Naive thymus-derived CD8-positive, alpha-beta T cell (primary cell): ENCODE measurements at regions of chr19 and their contacts with region 1.

Region 1: GRCh38 chr19:46431824-46432223 is 3.1 kb upstream of the PNMA8C start:
- DNase-seq: no peak
- ATAC-seq: no peak
- H3K4me3 Mint-ChIP-seq: no peak overlapping the region
- H3K27ac Mint-ChIP-seq: no peak overlapping the region
- H3K4me1 Mint-ChIP-seq: peaks cover 13 to 24% (median 19%) of the 10 kb centered on the region in 4 donors
- H3K27me3 Mint-ChIP-seq: peaks cover 35 to 74% (median 50%) of the 10 kb centered on the region in 5 donors

Region 2: DNA sequence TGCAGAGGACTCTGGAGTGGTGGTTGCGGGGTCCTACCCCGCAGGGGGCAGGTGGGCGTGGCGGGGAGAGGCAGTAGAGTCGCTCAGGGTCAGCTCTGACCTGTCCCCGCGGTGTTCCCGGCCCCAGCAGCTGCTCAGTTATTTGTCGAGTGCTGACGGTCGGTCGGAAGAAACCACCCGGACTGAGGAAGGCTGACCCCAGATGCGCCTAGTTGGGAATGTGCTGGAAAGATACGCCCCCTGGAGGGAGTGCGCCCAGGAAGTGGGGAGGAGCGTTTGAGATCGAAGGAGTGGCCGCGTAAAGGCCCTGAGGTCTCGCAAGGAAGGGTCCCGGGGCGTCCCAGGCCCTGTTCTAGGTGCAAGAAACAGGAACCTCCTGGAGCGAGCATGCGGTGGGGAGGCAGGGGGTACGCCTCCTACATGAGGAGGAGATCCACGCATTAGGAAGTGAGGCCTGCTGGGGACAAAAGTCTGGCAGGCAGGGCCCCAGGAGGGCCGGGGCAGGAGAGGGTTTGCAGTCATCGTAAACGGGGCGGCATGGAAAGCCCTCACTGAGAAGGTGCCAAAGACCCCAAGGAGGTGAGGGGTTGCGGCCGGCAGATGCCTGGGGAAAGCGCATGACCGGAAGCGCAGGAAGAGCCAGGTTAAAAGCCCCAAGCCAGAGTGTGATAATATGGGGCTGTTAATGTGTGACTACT is 27.6 kb before region 1 on chr19:
- POLR2A ChIA-PET with region 1: interaction called, 10 read pairs
- DNase-seq: no peak
- ATAC-seq: peak; percentile 43 to 44
- H3K4me3 Mint-ChIP-seq: peak overlapping the region; percentile 63 to 90 (median 76)
- H3K27ac Mint-ChIP-seq: peak overlapping the region in 1 of 10 donors; percentile 63
- H3K4me1 Mint-ChIP-seq: peaks cover 18 to 28% (median 22%) of the 10 kb centered on the region in 4 donors
- H3K27me3 Mint-ChIP-seq: peaks cover 34 to 85% (median 55%) of the 10 kb centered on the region in 5 donors

Region 3: GRCh38 chr19:46442808-46443450 is 11.1 kb after region 1 on chr19:
- POLR2A ChIA-PET with region 1: no interaction called
- DNase-seq: no peak
- ATAC-seq: no peak
- H3K4me3 Mint-ChIP-seq: no peak overlapping the region
- H3K27ac Mint-ChIP-seq: peak overlapping the region in 1 of 10 donors; percentile 29
- H3K4me1 Mint-ChIP-seq: peaks cover 0 to 4% (median 3%) of the 10 kb centered on the region in 4 donors
- H3K27me3 Mint-ChIP-seq: peaks cover 3 to 12% (median 8%) of the 10 kb centered on the region in 5 donors

Region 4: GRCh38 chr19:46461537-46461936 is 29.7 kb after region 1 on chr19:
- POLR2A ChIA-PET with region 1: no interaction called
- DNase-seq: no peak
- ATAC-seq: no peak
- H3K4me3 Mint-ChIP-seq: no peak overlapping the region
- H3K27ac Mint-ChIP-seq: no peak overlapping the region
- H3K4me1 Mint-ChIP-seq: no peaks in the 10 kb centered on the region
- H3K27me3 Mint-ChIP-seq: peaks cover 4 to 47% (median 14%) of the 10 kb centered on the region in 5 donors

Region 5: GRCh38 chr19:46487802-46488445 is 56.1 kb after region 1 on chr19:
- POLR2A ChIA-PET with region 1: no interaction called
- DNase-seq: peak; percentile 56 to 82 (median 74)
- ATAC-seq: peak; percentile 71 to 81
- H3K4me3 Mint-ChIP-seq: peak overlapping the region in 2 of 10 donors; percentile 31 to 47
- H3K27ac Mint-ChIP-seq: peak overlapping the region in 2 of 10 donors; percentile 19 to 57
- H3K4me1 Mint-ChIP-seq: peaks cover 15 to 57% (median 34%) of the 10 kb centered on the region in 4 donors
- H3K27me3 Mint-ChIP-seq: peaks cover 44 to 80% (median 62%) of the 10 kb centered on the region in 5 donors

Region 6: DNA sequence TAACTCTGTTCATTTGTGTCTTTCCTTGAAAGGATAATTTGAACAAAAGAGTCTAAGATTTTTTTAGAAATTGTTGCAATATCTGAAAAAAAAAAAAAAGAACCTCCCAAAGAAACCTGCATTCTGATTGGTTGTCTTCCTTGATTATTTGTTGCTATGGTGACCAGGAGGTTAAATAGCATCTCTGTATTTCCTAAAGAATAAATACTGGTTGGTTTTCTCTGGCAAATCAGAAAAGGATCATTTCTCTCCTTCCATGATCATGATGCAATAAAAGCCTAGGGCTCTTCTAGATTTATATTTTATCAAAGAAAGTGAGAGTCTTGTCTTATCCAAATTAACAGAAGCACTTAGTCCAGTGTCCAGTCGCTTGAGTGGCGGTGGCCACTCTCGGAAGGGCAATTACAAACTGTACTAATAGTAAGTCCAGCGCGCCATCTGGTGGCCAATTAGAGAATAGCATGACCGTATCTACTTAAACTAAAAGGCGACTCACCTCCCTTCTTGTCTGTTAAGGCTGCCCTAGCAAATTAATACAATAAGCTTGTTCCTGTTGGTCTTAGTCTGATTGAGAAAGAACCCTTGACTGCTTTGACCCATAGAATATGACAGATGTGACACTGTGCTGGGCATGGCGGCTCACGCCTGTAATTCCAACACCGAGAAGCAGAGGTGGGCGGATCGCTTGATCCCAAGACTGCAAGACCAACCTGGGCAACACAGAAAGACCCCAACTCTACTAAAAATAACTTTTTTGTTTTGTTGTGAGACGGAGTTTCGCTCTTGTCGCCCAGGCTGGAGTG is 110.8 kb after region 1 on chr19:
- POLR2A ChIA-PET with region 1: no interaction called
- DNase-seq: peak; percentile 59 to 89 (median 70)
- ATAC-seq: peak; percentile 53 to 66
- H3K4me3 Mint-ChIP-seq: no peak overlapping the region
- H3K27ac Mint-ChIP-seq: peak overlapping the region in 1 of 10 donors; percentile 54
- H3K4me1 Mint-ChIP-seq: peaks cover under 1 to 8% (median 5%) of the 10 kb centered on the region in 4 donors
- H3K27me3 Mint-ChIP-seq: peaks cover 0 to 4% (median 0%) of the 10 kb centered on the region in 5 donors